Activated B cell treated with CpG ODN at 0.5 μM for 24 hours (primary cell): ENCODE measurements at regions of chr17 and their contacts with region 1.

Region 1: DNA sequence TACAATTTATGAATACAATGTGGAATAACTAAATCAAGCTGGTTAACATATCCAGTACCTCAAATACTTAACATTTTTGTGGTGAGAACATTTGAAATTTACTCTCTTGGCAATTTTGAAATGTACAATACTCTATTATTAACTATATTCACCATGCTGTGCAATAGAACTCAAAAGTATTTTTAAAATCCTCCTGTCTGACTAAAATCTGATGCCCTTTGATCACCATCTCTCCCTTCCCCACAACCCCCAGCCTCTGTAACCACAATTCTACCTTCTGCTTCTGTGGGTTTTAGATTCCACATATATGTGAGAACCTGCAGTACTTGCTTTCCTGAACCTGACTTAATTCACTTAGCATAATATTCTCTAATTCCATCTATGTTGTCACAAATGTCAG is 71.6 kb upstream of the ALOX12 start:
- DNase-seq: no peak
- ATAC-seq: no peak
- H3K4me3 Mint-ChIP-seq: no peak overlapping the region
- H3K27ac Mint-ChIP-seq: no peak overlapping the region
- H3K4me1 Mint-ChIP-seq: peaks cover 2% of the 10 kb centered on the region
- H3K27me3 Mint-ChIP-seq: peaks cover 6% of the 10 kb centered on the region
- CTCF ChIP-seq: no peak

Region 2: DNA sequence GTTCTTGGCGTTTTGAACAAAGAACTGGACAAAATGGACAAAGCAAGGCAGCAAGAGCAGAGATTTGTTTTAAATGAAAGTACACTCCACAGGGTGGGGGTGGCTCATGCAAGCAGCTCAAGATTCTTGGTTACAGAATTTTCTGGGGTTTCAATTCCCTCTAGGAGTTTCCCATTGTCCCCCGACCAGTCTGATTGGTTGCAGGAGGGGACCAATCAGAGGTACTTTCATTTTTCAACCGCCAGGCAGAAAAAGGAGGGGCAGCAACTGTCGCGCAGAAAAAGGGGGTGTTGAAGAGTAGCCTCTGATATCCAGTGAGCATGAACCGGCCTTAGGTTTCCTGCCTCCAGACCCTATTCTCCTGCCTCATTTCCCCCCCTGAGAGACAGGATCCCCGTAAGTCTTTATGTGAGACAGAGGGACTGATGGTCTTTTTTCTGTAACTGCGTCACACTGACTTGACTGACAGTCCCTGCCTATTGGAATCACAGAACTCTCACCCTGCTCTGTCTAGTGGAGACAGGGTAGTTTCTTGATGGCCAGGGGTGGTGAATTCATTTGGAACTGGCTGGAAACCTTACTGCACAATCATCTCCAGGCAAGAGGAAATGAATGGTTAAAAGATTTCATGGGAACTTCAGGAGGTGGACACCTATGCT is 12.3 kb after region 1 on chr17:
- CTCF ChIA-PET with region 1: no interaction called
- POLR2A ChIA-PET with region 1: interaction called, 13 read pairs
- intact Hi-C with region 1: no loop called
- DNase-seq: no peak
- ATAC-seq: peak; percentile 91
- H3K4me3 Mint-ChIP-seq: peak overlapping the region; percentile 77
- H3K27ac Mint-ChIP-seq: peak overlapping the region; percentile 76
- H3K4me1 Mint-ChIP-seq: peaks cover 9% of the 10 kb centered on the region
- H3K27me3 Mint-ChIP-seq: no peaks in the 10 kb centered on the region
- CTCF ChIP-seq: no peak